ENCODE measurements at regions of chr9 and their contacts with region 1.

Region 1: GRCh38 chr9:105087910-105088888 is 156.3 kb upstream of the SLC44A1 start:
- DNase-seq: peak; percentile 69 to 74
- H3K4me3 ChIP-seq: no peak overlapping the region
- H3K4me3 Mint-ChIP-seq: peak overlapping the region; percentile 37
- H3K27ac Mint-ChIP-seq: peak overlapping the region; percentile 84
- H3K4me1 ChIP-seq: peaks cover 48% of the 10 kb centered on the region
- H3K4me1 Mint-ChIP-seq: peaks cover 28% of the 10 kb centered on the region
- H3K27me3 ChIP-seq: no peaks in the 10 kb centered on the region
- H3K27me3 Mint-ChIP-seq: no peaks in the 10 kb centered on the region
- CTCF ChIP-seq: no peak

Region 2: DNA sequence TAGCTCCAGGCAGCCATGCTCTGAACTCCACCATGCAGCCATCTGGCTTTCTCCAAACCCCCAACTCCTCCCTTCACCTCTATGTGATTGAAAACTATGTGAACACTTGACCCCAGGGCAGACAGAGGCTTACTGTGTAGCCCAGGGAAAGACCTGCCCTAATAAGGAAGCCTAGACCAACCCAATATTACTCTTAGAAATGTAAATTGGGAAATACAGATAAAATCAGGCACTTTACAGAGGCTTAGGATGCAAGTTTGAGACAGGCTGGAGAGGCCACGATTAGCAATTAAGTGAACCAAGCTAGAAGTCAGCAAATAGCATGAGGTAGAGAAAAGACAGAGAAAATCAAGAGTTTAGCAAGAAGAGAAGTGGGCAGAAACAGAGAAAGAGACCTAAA is 18.5 kb before region 1 on chr9:
- CTCF ChIA-PET with region 1: interaction called, 4 read pairs
- POLR2A ChIA-PET with region 1: interaction called, 9 read pairs
- intact Hi-C with region 1: loop called (anchors 1 kb)
- DNase-seq: peak; percentile 47 to 73
- H3K4me3 ChIP-seq: no peak overlapping the region
- H3K4me3 Mint-ChIP-seq: no peak overlapping the region
- H3K27ac Mint-ChIP-seq: peak overlapping the region; percentile 1
- H3K4me1 ChIP-seq: peaks cover 31% of the 10 kb centered on the region
- H3K4me1 Mint-ChIP-seq: peaks cover 29% of the 10 kb centered on the region
- H3K27me3 ChIP-seq: no peaks in the 10 kb centered on the region
- H3K27me3 Mint-ChIP-seq: no peaks in the 10 kb centered on the region
- CTCF ChIP-seq: no peak

Region 3: GRCh38 chr9:105219291-105219805 is 131.1 kb after region 1 on chr9:
- CTCF ChIA-PET with region 1: no interaction called
- POLR2A ChIA-PET with region 1: no interaction called
- intact Hi-C with region 1: no loop called
- DNase-seq: no peak
- H3K4me3 ChIP-seq: no peak overlapping the region
- H3K4me3 Mint-ChIP-seq: no peak overlapping the region
- H3K27ac Mint-ChIP-seq: no peak overlapping the region
- H3K4me1 ChIP-seq: no peaks in the 10 kb centered on the region
- H3K4me1 Mint-ChIP-seq: peaks cover 10% of the 10 kb centered on the region
- H3K27me3 ChIP-seq: no peaks in the 10 kb centered on the region
- H3K27me3 Mint-ChIP-seq: no peaks in the 10 kb centered on the region
- CTCF ChIP-seq: no peak

Measured in Caco-2 (cell line).